MCF 10A (cell line): ENCODE measurements at regions of chr1 and their contacts with region 1.

Region 1: DNA sequence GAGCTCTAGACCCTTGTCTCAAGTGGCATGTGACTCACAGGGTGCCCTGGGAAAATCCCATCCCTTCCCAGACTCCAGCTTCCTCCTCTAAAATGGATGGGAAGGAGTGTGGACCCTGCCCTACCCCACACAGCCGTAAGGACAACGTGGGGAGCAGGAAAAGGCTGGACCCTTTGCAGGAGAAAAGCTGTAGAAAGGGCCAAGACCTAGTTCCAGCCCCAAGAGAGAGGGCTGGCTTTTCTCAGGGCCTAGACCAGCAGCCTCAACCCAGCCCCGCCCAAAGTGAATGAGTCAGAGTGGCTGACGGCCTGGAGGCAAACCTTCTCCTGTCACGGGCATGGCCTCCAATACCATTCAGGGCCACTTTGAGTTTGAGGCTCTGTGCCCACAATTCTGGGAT is 1.1 kb downstream of the LAMB3 start:
- DNase-seq: peak; percentile 99
- H3K4me3 Mint-ChIP-seq: peak overlapping the region; percentile 83
- H3K27ac Mint-ChIP-seq: peak overlapping the region; percentile 99
- H3K4me1 Mint-ChIP-seq: peaks cover 80% of the 10 kb centered on the region
- H3K27me3 Mint-ChIP-seq: no peaks in the 10 kb centered on the region
- CTCF ChIP-seq: no peak

Region 2: DNA sequence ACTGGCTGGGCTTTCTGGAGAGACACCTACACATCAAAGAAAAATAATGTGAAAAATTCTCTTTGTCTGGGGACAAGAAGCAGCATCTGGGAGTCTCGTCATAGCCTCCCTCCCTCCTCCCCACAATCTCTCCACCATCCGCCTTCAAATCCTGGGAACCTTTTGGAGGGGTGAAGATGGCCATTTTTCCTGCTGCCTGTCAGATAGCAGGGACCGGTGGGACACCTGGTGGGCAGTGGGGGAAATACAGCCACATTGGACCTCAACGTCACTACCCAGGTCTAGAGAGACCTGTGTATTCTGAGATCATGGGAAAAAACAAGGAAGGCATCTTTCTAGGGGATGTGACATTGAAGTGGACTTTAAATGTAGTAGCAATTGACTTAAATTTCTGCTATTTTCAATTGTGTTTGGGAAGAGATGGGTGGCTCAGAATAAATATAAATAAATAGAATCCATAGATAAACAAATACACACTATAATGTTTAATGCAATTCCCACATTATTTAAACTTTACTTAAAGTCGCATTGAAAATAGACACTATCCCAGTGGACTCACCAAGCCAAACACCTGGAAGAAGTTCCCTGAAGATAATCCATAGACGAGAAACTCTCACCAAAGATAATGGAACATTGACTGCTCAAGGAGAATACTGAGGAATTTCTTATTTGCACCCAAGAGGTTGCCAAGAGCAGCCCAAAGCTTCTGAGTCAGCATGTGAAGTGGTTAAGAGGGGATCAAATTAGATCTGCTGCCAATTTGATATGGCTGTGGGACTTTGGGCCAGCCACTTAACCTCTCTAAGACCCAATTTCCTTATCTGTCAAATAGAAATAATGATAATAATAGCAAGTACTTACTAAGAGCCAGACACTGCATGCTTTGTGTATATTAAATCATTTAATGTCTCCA is 215.2 kb before region 1 on chr1:
- CTCF ChIA-PET with region 1: interaction called, 3 read pairs
- POLR2A ChIA-PET with region 1: interaction called, 126 read pairs
- intact Hi-C with region 1: no loop called
- DNase-seq: peak; percentile 97
- H3K4me3 Mint-ChIP-seq: no peak overlapping the region
- H3K27ac Mint-ChIP-seq: peak overlapping the region; percentile 90
- H3K4me1 Mint-ChIP-seq: peaks cover 51% of the 10 kb centered on the region
- H3K27me3 Mint-ChIP-seq: no peaks in the 10 kb centered on the region
- CTCF ChIP-seq: peak; percentile 100

Region 3: DNA sequence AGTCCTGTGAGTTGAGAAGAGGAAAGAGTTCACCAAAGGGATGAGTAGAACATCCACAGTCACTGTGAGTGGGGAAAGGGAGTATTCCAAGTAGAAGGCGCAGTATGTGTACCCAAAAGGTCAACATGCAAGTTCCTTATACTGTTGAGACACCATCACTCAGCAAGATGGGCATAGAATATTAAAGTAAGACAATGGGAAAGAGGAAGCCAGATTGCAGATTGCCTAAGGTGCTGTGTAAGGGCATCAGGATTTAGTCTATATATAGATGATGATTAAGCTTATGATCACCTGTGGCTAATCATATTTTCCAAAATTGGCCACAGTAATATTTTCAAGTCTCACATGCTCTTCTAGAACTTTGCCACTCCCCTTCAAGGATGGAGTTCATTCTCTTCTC is 187.7 kb before region 1 on chr1:
- CTCF ChIA-PET with region 1: no interaction called
- POLR2A ChIA-PET with region 1: no interaction called
- intact Hi-C with region 1: no loop called
- DNase-seq: no peak
- H3K4me3 Mint-ChIP-seq: no peak overlapping the region
- H3K27ac Mint-ChIP-seq: no peak overlapping the region
- H3K4me1 Mint-ChIP-seq: no peaks in the 10 kb centered on the region
- H3K27me3 Mint-ChIP-seq: peaks cover 2% of the 10 kb centered on the region
- CTCF ChIP-seq: no peak

Region 4: DNA sequence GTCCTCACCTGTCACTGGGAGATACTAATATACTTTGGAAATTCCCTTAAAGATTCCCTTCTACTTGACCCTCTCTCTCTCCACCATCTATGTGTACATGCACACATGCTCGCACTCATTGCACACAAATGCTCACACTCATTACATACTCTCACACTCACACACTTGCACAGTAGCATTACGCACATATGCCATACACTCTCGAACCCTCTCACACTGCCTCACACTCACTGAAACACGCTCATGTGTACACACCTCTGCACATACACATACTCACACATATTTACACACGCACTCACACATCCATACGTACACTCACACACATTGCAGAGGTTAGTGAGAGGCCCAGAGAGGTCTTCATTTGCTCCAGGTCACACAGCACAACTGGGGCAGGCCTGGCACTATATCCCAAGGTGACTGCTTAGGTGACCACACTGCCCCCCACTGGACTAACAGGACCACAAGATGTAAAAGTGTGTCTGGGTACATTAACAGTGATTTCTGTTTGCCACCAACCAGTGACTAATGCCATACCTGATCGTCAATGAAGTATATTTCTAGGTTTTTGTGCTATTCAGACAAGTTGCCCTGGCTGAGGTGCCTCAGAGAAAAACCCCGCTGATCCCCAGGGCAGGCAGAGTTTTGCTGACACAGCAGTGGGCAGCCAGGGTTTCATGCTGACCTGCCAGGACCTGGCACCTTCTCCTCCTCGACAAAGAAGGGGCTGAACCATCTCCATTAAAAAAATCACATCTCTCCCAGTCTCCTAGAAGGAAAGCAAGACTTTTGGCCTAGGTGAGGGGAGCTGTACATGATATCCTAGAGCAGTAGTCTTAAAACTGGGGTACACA is 96.2 kb before region 1 on chr1:
- CTCF ChIA-PET with region 1: no interaction called
- POLR2A ChIA-PET with region 1: no interaction called
- intact Hi-C with region 1: no loop called
- DNase-seq: no peak
- H3K4me3 Mint-ChIP-seq: no peak overlapping the region
- H3K27ac Mint-ChIP-seq: no peak overlapping the region
- H3K4me1 Mint-ChIP-seq: peaks cover 13% of the 10 kb centered on the region
- H3K27me3 Mint-ChIP-seq: no peaks in the 10 kb centered on the region
- CTCF ChIP-seq: peak; percentile 23

Region 5: DNA sequence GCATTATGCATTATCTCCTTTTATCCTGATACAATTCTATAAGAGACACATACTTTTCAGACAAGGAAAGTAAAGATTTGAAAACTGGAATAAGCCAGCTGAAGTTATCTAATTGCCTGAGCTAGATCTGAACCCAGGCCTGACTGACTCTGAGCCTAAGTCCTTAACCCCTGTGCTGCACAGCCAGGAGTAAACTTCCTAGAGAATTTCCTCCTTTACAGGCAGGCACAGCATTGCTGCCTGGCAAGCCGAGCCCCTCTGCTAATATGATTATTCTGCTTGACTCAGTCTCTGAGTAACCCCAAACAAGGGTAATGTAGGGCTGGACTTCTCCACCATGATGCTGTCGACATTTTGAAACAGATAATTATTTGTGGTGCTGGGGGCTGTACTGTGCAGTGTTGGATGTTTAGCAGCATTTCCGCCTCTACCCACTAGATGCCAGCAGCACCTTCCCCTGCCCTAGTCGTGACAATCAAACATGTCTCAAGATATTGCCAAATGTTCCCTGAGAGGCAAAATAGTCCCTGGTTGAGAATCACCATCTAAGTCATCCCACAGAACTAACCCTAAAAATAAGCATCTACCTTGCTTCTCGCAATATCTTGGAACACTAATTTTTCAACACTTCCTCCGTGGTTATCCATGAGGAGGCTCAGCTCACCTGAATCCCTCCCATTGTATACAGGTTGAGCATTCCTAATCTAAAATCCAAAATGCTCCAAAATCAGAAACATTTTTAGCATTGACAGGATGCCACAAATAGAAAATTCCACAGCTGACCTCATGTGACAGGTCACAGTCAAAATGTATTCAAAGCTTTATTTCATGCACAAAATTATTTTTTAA is 49.1 kb before region 1 on chr1:
- CTCF ChIA-PET with region 1: interaction called, 21 read pairs
- POLR2A ChIA-PET with region 1: interaction called, 29 read pairs
- intact Hi-C with region 1: loop called (anchors 1 kb)
- DNase-seq: peak; percentile 90
- H3K4me3 Mint-ChIP-seq: no peak overlapping the region
- H3K27ac Mint-ChIP-seq: no peak overlapping the region
- H3K4me1 Mint-ChIP-seq: no peaks in the 10 kb centered on the region
- H3K27me3 Mint-ChIP-seq: no peaks in the 10 kb centered on the region
- CTCF ChIP-seq: peak; percentile 92

Region 6: DNA sequence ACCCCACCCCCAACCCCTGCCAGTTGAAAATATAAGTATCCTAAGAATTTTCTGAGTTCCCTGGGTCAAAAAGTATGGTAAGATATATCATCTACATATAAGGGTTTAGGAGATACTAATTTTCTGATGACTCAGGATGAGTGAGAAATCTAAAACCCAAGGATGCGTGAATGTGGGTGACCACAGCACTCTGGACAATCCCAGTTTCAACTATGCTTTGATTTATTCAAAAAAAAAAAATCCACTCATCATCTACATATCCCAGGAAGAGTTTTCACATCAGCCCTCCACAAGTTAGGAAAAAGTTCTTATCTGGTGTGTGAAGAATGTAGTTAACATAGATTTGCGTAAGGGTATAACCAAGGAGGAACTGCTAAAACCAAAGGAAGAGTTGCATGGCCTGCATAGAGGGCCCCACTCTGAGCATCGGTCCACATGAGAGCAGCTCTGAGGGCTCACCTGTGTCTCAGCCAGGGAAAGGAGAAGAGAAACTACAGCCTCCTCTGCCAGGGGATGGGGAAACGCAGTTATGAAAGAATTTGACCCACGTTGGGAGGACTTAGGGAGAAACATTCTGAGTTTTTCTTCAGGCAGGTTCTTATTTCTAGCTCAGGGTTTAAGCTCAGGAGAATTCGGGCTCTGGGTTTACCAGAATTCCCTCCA is 17.7 kb before region 1 on chr1:
- CTCF ChIA-PET with region 1: interaction called, 25 read pairs
- POLR2A ChIA-PET with region 1: interaction called, 20 read pairs
- intact Hi-C with region 1: loop called (anchors 2 kb)
- DNase-seq: no peak
- H3K4me3 Mint-ChIP-seq: no peak overlapping the region
- H3K27ac Mint-ChIP-seq: peak overlapping the region; percentile 83
- H3K4me1 Mint-ChIP-seq: peaks cover 47% of the 10 kb centered on the region
- H3K27me3 Mint-ChIP-seq: no peaks in the 10 kb centered on the region
- CTCF ChIP-seq: no peak

Region 7: DNA sequence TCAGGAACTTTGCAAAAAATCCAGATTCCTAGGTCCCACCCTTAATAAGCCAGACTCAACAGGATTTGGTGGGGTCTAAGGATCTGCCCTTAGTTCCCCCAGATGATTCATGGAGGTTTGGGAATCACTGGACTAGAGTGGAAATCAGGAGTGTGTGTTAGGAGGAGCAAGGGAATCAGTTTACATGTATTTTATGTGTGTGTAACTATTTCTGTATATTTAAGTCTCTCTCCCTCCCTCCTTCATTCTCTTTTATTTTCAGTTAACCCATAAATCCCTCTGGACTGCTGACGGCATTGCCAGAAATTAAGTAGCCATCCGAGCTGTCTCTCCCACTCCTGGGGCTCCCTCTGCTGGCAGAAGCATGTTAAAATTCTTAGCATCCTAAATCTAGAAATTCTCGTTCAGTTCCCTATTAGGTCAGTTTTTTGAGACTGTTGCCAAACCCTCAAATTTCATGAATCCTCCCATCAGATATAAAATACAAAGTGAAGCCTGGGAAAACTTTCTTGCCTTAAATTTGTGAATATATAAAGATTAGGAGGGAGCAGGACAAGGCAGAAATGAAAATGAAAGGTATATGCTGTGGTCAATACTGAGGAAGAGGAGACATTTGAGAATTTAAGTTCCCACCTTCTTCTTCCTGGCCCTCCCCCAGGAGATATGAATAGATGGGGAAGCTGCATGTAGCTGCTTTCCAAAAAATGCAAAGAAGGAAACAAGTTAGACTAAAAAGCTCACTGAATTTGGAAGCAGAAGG is 41.8 kb after region 1 on chr1:
- CTCF ChIA-PET with region 1: interaction called, 564 read pairs
- POLR2A ChIA-PET with region 1: interaction called, 458 read pairs
- intact Hi-C with region 1: loop called (anchors 1 kb)
- DNase-seq: peak; percentile 98
- H3K4me3 Mint-ChIP-seq: no peak overlapping the region
- H3K27ac Mint-ChIP-seq: peak overlapping the region; percentile 55
- H3K4me1 Mint-ChIP-seq: peaks cover 64% of the 10 kb centered on the region
- H3K27me3 Mint-ChIP-seq: peaks cover 17% of the 10 kb centered on the region
- CTCF ChIP-seq: peak; percentile 100

Region 8: GRCh38 chr1:209815931-209816341 is 164.8 kb after region 1 on chr1:
- CTCF ChIA-PET with region 1: interaction called, 6 read pairs
- POLR2A ChIA-PET with region 1: interaction called, 26 read pairs
- intact Hi-C with region 1: no loop called
- DNase-seq: peak; percentile 100
- H3K4me3 Mint-ChIP-seq: peak overlapping the region; percentile 44
- H3K27ac Mint-ChIP-seq: peak overlapping the region; percentile 91
- H3K4me1 Mint-ChIP-seq: peaks cover 29% of the 10 kb centered on the region
- H3K27me3 Mint-ChIP-seq: no peaks in the 10 kb centered on the region
- CTCF ChIP-seq: no peak

Region 9: DNA sequence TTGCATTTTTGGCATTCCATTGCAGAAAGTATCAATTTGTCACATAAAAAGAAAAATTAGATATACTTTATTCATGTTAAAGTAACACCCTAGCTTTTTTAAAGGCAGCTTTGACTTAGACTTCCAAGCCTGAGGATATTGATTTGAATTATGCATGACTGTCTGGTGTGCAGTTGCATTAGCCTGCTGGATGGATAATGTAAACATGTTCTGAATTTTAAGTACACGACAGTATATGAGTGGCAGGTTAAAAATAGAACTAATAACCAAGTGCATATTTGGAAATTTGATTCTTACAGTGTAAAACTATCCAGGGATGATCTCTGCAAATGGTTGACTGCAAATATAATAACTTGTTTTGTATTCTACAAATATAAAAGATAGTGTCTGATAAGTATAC is 410.8 kb after region 1 on chr1:
- CTCF ChIA-PET with region 1: no interaction called
- POLR2A ChIA-PET with region 1: no interaction called
- intact Hi-C with region 1: no loop called
- DNase-seq: no peak
- H3K4me3 Mint-ChIP-seq: no peak overlapping the region
- H3K27ac Mint-ChIP-seq: no peak overlapping the region
- H3K4me1 Mint-ChIP-seq: no peaks in the 10 kb centered on the region
- H3K27me3 Mint-ChIP-seq: peaks cover 87% of the 10 kb centered on the region
- CTCF ChIP-seq: no peak